ENCODE measurements at regions of chr11 and their contacts with region 1.

Region 1: DNA sequence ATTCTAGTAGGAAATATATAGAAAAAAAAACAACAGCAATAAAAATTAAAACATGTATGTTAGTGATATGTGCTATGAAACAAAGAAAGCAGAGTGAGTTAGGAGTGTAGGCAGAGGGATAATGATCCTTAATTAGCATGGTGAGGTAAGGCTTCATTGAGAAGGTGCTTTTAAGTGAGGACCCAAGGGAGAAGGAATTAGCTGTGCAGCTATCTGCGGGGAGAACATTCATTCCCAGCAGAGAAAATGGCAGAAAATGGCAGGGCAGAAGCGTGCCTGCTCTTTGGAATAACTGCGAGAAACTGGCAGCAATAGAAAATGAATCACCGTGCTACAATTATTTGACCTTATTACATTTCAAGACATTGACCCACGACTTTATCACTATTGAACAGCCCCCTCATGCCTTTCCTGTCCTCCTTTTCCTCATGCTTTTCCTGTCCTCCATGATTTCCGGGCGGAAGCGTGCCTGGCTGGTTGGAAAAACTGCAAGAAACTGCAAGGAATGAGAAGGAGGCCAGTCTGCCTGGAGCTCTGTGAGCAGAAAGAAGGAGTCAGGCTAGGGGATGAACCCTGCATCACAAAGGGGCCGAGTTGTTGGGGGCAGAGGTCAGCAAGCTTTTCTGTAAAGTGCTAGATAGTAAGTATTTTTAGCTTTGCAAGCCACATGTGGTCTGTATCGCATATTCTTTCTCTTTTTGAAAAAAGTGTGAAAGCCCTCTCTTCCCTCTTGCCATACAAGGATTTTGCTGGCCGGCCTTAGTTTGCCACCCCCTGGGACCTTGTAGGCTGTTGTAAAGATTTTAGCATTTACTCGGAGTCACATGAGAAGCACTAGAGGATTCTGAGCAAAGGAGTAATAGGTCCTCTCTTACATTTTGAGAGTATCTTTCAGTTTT is 37.1 kb upstream of the SWAP70 start:
- DNase-seq: no peak
- ATAC-seq: no peak
- H3K4me3 ChIP-seq: no peak overlapping the region
- H3K4me1 ChIP-seq: no peaks in the 10 kb centered on the region
- CTCF ChIP-seq: no peak

Region 2: GRCh38 chr11:9550191-9550628 is 76.5 kb before region 1 on chr11:
- intact Hi-C with region 1: no loop called
- DNase-seq: no peak
- ATAC-seq: no peak
- H3K4me3 ChIP-seq: no peak overlapping the region
- H3K4me1 ChIP-seq: no peaks in the 10 kb centered on the region
- CTCF ChIP-seq: no peak

Region 3: GRCh38 chr11:9895006-9895405 is 268.3 kb after region 1 on chr11:
- intact Hi-C with region 1: no loop called
- DNase-seq: no peak
- ATAC-seq: no peak
- H3K4me3 ChIP-seq: no peak overlapping the region
- H3K4me1 ChIP-seq: peaks cover 12% of the 10 kb centered on the region
- CTCF ChIP-seq: no peak

Region 4: DNA sequence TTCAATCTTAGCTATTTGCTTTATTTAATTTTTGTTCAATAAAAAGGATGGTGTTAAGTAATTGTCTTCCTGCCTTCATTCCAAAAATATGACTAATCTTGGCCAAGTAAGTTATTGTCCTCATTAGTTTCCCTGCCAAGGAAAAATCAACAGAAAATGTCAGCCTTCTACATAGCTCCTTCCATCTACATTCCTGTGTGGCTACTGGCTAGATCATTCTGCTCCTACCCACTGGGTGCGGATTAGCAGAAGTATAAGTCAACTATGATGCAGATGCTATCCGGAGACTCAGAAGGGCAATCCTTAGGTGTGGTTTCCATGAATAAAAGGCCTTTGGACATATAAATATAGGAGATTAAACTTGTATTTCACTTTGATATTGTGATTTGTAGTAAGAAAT is 512.9 kb after region 1 on chr11:
- intact Hi-C with region 1: loop called in 1 of 2 experiments (anchors 10 kb)
- DNase-seq: no peak
- ATAC-seq: peak; percentile 27
- H3K4me3 ChIP-seq: no peak overlapping the region
- H3K4me1 ChIP-seq: peaks cover 3% of the 10 kb centered on the region
- CTCF ChIP-seq: no peak